HEK293T (cell line): ENCODE measurements at regions of chrX and their contacts with region 1.

Region 1: GRCh38 chrX:12901486-12901885 is 4.9 kb upstream of the TLR8 start:
- DNase-seq: peak; percentile 73

Region 2: GRCh38 chrX:12814420-12814819 is 87.1 kb before region 1 on chrX:
- CTCF ChIA-PET with region 1: interaction called, 11 read pairs
- POLR2A ChIA-PET with region 1: no interaction called
- DNase-seq: peak; percentile 42